ENCODE measurements at regions of chr1 and their contacts with region 1.

Region 1: GRCh38 chr1:206912445-206913095 is 9.2 kb downstream of the FCMR start:
- DNase-seq: peak in 1 of 2 donors; percentile 79
- H3K4me3 ChIP-seq: no peak overlapping the region
- H3K27ac ChIP-seq: no peak overlapping the region
- H3K4me1 ChIP-seq: peaks cover 0 to 10% of the 10 kb centered on the region in 2 donors
- H3K27me3 ChIP-seq: peaks cover 10% of the 10 kb centered on the region
- CTCF ChIP-seq: peak; percentile 72 to 82 (median 78)

Region 2: GRCh38 chr1:206479183-206480125 is 433.1 kb before region 1 on chr1:
- intact Hi-C with region 1: loop called (anchors 5 kb)
- DNase-seq: peak in 1 of 2 donors; percentile 80
- H3K4me3 ChIP-seq: no peak overlapping the region
- H3K27ac ChIP-seq: no peak overlapping the region
- H3K4me1 ChIP-seq: no peaks in the 10 kb centered on the region
- H3K27me3 ChIP-seq: no peaks in the 10 kb centered on the region
- CTCF ChIP-seq: peak; percentile 69 to 81 (median 69)

Region 3: GRCh38 chr1:206612129-206612876 is 300.3 kb before region 1 on chr1 and contains the start of gene EIF2D:
- intact Hi-C with region 1: loop called (anchors 5 kb)
- DNase-seq: peak; percentile 67 to 96
- H3K4me3 ChIP-seq: peak within 1 kb of the TSS; percentile 64 to 84
- H3K27ac ChIP-seq: peak within 1 kb of the TSS; percentile 84 to 85
- H3K4me1 ChIP-seq: peaks cover 3 to 11% of the 10 kb centered on the region in 2 donors
- H3K27me3 ChIP-seq: no peaks in the 10 kb centered on the region
- CTCF ChIP-seq: peak; percentile 98 to 99 (median 99)
- total RNA-seq, gene EIF2D: 40.2 TPM

Region 4: GRCh38 chr1:206663832-206664652 is 248.5 kb before region 1 on chr1:
- intact Hi-C with region 1: loop called (anchors 5 kb)
- DNase-seq: no peak
- H3K4me3 ChIP-seq: peak overlapping the region in 1 of 2 donors; percentile 29
- H3K27ac ChIP-seq: no peak overlapping the region
- H3K4me1 ChIP-seq: peaks cover 0 to 7% of the 10 kb centered on the region in 2 donors
- H3K27me3 ChIP-seq: no peaks in the 10 kb centered on the region
- CTCF ChIP-seq: peak; percentile 78 to 87 (median 80)

Region 5: DNA sequence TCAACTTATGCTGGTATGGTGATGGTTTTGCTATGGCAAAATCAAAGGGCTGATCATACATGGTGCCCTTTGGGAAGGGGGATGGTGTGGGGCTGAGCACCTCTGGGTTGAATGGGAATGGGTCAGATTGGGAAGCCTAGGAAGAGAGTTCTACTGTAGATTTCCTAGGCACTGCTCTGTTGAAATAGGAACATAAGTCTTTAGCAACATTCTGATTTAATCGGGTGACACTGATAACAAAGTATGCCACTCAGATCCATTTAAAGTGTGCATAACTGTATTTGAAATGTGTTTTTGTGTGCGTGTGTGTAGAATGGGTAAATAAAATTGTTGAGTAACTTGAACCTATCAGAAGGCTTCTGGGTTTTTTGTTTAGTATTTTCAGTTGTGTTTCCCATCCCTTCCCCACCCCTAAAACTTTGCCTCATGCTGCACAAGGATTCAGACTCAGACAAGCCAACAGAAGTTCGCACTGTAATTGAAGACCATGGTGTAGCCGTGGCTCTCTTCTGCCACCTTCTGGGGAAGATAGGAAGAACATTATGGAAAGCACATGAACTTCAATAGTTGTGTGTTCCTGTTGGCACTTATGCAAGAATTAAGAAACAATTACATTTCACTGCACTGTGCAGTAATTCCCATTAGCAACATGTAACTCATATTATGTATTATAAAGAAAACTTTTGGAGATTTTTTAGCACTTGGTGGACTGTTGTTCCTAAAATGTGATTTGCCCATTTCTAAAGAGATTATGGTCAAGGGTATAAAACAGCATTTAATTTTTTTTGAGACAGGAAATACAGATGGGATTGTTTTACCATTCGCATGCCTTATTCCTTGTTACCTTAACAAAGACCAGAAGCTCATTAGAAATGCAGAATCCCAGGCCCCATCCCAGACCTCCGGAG is 165.2 kb after region 1 on chr1:
- intact Hi-C with region 1: no loop called
- DNase-seq: peak in 1 of 2 donors; percentile 81
- H3K4me3 ChIP-seq: no peak overlapping the region
- H3K27ac ChIP-seq: no peak overlapping the region
- H3K4me1 ChIP-seq: peaks cover 0 to 6% of the 10 kb centered on the region in 2 donors
- H3K27me3 ChIP-seq: no peaks in the 10 kb centered on the region
- CTCF ChIP-seq: peak; percentile 78 to 87 (median 80)

Measured in ascending aorta (tissue), 2 donors.